ENCODE measurements at regions of chr2 and their contacts with region 1.

Region 1: DNA sequence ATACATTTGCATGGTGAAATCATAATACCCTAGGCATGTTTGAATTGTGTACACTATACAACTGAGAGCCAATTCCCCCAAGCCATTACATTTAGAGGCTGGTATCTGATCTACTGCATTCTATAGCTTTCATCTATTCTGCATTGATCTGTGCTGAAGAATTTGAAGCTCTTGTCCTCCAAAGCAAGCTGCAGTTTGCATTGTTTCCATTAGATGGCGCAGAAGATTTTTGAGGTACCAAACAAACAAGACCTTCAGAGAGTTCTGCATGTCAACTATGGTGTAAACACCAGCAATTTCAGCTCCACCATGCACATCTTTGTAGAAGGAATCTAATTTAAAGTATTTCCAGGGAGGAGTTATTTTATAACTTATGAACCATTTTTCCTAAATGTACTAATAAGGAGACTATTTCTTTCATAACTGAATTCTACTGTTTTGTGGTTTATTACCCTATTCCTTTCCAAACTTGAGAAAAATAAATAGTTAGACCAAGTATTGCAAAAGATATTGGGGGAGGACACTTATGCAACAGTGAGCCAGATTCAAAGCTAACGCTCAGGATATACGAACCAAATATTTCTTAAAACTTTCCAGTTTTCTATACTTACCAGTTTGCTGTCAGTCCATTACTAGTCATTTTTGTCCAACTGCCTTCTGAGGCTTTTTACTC is 761.8 kb upstream of the ACVR2A start:
- DNase-seq: no peak
- H3K4me3 ChIP-seq: no peak overlapping the region
- H3K27ac ChIP-seq: no peak overlapping the region
- H3K4me1 ChIP-seq: peaks cover 0 to 4% (median 0%) of the 10 kb centered on the region in 6 donors
- H3K27me3 ChIP-seq: no peaks in the 10 kb centered on the region
- CTCF ChIP-seq: peak; percentile 47 to 79 (median 71)
- POLR2A ChIP-seq: no peak

Region 2: DNA sequence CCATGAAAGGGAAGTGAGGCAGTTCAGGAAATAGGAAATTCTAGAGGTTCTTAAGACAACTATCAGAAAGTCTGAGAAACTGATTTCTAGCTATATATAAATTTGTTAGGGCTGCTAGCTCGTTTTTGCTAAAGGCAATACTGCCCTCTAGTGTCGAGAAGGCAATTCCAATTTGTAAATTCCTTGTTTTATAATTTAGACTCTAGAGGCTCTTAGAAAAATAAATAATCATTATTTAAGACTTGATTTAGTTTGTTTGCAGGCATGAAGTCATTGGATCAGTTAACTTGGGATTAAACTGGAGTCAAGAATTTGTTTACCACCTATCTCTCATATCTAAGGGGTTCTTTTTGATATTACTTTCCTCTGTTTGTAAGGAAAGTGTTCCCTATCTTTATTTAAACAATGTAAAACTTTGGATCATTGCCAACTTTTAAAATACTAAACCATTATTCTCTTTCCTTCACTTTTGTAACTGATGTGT is 828.0 kb after region 1 on chr2:
- intact Hi-C with region 1: loop called (anchors 5 kb)
- DNase-seq: no peak
- H3K4me3 ChIP-seq: no peak overlapping the region
- H3K27ac ChIP-seq: no peak overlapping the region
- H3K4me1 ChIP-seq: peaks cover 0 to 17% (median 7%) of the 10 kb centered on the region in 6 donors
- H3K27me3 ChIP-seq: no peaks in the 10 kb centered on the region
- CTCF ChIP-seq: peak; percentile 43 to 81 (median 71)
- POLR2A ChIP-seq: no peak

Measured in spleen (tissue), 13 donors.